Body of pancreas (tissue), 4 donors: ENCODE measurements at regions of chr17 and their contacts with region 1.

Region 1: DNA sequence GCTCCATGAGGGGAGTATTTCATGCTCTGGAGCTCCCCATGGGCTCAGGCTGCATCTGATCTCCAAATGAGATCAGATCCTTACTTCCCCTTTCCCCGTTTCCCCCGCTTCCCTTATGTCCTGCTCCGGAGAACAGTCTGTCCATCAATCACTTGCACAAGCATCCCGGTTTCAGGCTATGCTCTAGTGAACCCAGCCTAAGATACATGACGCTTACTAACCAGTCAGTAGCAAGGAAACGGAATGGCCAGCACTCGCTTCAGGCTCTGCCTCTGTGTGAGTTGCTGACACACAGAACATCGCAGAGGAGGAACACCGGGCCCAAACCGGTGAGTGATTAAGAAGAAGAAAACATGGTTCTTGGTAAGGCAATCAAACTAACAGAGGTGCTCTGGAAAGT is 9.4 kb upstream of the ATP5MC1 start:
- DNase-seq: no peak
- ATAC-seq: no peak
- H3K4me3 ChIP-seq: no peak overlapping the region
- H3K27ac ChIP-seq: no peak overlapping the region
- H3K4me1 ChIP-seq: peaks cover 5% of the 10 kb centered on the region
- H3K27me3 ChIP-seq: no peaks in the 10 kb centered on the region
- CTCF ChIP-seq: no peak
- POLR2A ChIP-seq: no peak

Region 2: GRCh38 chr17:48724251-48725003 is 158.7 kb before region 1 on chr17:
- intact Hi-C with region 1: loop called (anchors 10 kb)
- DNase-seq: peak; percentile 85 to 90 (median 87)
- ATAC-seq: peak; percentile 82
- H3K4me3 ChIP-seq: no peak overlapping the region
- H3K27ac ChIP-seq: no peak overlapping the region
- H3K4me1 ChIP-seq: peaks cover 24% of the 10 kb centered on the region
- H3K27me3 ChIP-seq: peaks cover 0 to 74% of the 10 kb centered on the region in 2 donors
- CTCF ChIP-seq: peak; percentile 55 to 76 (median 71)
- POLR2A ChIP-seq: no peak

Region 3: DNA sequence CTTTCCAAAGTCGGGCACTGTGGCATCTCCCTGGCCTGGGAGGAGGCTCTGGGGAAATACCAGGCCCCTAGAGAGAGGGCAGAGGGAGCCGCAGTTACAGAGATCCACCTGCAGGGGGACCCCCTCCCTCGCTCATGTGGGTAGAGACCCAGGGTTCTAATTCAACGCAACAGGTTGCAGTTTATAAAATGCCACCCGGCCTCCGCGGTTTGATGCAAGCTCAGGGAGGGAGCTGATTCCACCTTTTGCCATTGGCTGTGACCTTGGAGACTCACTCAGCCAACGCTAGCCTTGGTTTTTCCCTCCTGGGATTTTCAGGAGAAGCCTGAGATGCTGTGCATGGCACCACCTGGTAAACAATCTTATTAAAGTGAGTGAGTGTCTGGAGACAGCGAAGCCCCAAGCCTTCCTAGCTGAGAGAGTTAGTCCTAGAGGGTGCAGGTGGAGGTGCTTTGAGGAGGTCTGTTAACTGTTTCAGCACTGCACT is 78.2 kb before region 1 on chr17:
- intact Hi-C with region 1: loop called (anchors 5 kb)
- DNase-seq: peak; percentile 56 to 67 (median 60)
- ATAC-seq: peak; percentile 84
- H3K4me3 ChIP-seq: no peak overlapping the region
- H3K27ac ChIP-seq: peak overlapping the region in 3 of 4 donors; percentile 4 to 41 (median 41)
- H3K4me1 ChIP-seq: peaks cover 42% of the 10 kb centered on the region
- H3K27me3 ChIP-seq: peaks cover 0 to 4% of the 10 kb centered on the region in 2 donors
- CTCF ChIP-seq: peak; percentile 74 to 92 (median 84)
- POLR2A ChIP-seq: no peak

Region 4: DNA sequence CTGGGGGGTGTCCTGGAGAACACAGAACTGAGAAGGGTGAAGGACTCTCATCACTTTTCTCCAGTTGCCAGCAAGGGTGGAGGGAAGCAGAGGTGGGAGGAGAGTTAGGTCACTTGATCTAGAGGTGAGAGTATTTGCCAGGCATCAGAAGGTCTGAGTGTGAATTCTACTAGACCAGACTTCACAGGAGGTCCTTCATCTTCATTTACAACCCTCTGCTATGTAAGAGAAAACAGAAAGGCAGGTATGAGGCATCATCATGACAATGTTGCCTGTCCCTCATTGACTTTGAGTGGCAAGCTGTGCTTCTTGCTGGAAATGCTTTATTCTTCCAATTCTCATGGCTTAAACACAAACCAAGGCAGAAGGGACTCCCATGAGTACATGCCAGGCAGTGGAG is 203.5 kb after region 1 on chr17:
- intact Hi-C with region 1: no loop called
- DNase-seq: no peak
- ATAC-seq: no peak
- H3K4me3 ChIP-seq: no peak overlapping the region
- H3K27ac ChIP-seq: no peak overlapping the region
- H3K4me1 ChIP-seq: no peaks in the 10 kb centered on the region
- H3K27me3 ChIP-seq: no peaks in the 10 kb centered on the region
- CTCF ChIP-seq: no peak
- POLR2A ChIP-seq: no peak